Activated CD4-positive, alpha-beta memory T cell treated with anti-CD3 and anti-CD28 coated beads for 36 hours (primary cell): ENCODE measurements at regions of chr15 and their contacts with region 1.

Region 1: GRCh38 chr15:36883713-36884517 is 216.4 kb downstream of the MEIS2 start:
- DNase-seq: peak; percentile 76
- H3K4me3 Mint-ChIP-seq: no peak overlapping the region
- H3K27ac Mint-ChIP-seq: no peak overlapping the region
- H3K4me1 Mint-ChIP-seq: peaks cover 14% of the 10 kb centered on the region
- H3K27me3 Mint-ChIP-seq: peaks cover 89% of the 10 kb centered on the region

Region 2: DNA sequence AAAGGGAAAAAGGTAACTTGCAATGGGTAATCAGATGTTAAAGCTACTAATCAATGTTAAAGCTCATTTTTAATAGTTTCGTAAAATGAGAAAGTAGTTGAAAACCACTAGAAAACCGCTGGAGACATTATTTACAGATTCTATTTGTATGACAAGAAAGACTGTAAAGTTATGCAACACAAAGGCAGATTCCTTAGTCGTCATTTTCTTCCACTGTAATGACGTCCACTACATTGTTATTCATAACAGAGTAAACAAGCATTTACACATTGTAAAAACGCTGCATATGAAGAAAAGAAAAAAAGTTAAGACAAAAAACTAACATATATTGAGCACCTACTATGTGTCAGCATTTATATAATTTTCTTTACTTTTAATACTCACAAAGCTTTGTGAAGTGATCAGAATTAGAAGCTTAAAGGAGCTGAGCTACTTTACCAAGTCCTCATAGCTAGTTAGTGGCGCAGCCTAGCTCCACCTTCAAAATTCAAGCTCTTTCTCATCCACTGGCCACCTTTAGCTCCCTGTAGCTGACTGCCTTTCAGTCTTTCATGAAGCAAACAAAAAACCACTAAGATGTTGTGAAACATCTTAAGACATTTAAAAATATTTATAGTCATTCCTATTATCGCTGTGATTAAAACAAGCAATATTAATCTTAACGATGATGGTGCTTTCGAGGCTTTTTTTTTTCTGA is 404.6 kb before region 1 on chr15:
- CTCF ChIA-PET with region 1: no interaction called
- POLR2A ChIA-PET with region 1: no interaction called
- intact Hi-C with region 1: no loop called
- DNase-seq: no peak
- H3K4me3 Mint-ChIP-seq: no peak overlapping the region
- H3K27ac Mint-ChIP-seq: no peak overlapping the region
- H3K4me1 Mint-ChIP-seq: no peaks in the 10 kb centered on the region
- H3K27me3 Mint-ChIP-seq: peaks cover 1% of the 10 kb centered on the region

Region 3: GRCh38 chr15:36666228-36666905 is 217.5 kb before region 1 on chr15:
- CTCF ChIA-PET with region 1: no interaction called
- POLR2A ChIA-PET with region 1: no interaction called
- intact Hi-C with region 1: no loop called
- DNase-seq: no peak
- H3K4me3 Mint-ChIP-seq: no peak overlapping the region
- H3K27ac Mint-ChIP-seq: no peak overlapping the region
- H3K4me1 Mint-ChIP-seq: no peaks in the 10 kb centered on the region
- H3K27me3 Mint-ChIP-seq: no peaks in the 10 kb centered on the region

Region 4: DNA sequence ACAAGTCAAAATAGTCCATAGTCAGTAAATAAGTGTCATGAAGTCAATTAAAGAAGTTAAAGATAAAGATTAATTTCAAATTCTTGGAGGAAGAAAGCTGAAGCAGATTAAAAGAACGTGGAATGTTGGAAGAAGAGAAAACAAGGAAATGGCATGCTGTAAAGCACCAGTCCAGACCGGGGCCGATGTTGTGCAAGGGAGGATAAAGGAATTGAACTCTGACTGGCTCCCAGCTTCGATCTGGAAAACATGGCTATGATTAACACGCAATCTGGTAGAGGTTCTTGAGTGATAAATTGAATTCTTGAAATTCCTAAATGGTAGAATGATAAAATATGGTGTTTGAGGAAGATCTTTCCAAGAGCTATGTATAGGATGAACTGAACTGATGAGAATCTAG is 22.0 kb after region 1 on chr15:
- CTCF ChIA-PET with region 1: no interaction called
- POLR2A ChIA-PET with region 1: no interaction called
- intact Hi-C with region 1: no loop called
- DNase-seq: no peak
- H3K4me3 Mint-ChIP-seq: no peak overlapping the region
- H3K27ac Mint-ChIP-seq: no peak overlapping the region
- H3K4me1 Mint-ChIP-seq: no peaks in the 10 kb centered on the region
- H3K27me3 Mint-ChIP-seq: no peaks in the 10 kb centered on the region

Region 5: DNA sequence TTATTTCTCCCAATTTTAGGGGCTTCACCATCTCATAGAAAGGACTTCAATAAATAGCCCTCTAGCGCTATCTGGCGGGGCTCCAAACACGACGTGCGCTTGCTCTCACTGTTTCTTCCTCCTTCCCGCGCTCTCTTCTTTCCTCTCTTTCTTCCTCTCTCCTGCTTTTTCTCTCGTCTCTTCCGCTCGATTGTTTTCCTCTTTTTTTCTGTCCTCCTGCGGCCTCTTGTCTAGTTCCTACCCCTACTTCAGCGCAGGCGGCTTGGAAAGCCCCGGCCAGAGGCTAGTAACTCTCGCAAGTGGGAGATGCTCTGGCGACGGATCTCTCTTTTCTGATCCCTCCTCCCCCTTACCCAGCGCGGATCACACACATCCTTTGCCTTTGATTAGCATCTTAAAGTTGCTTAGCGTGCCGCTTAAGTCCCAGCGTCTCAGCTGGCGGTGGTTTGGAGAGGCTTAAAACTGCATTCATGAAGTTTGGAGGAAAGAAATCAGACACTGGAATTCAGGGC is 222.6 kb after region 1 on chr15:
- CTCF ChIA-PET with region 1: interaction called, 3 read pairs
- POLR2A ChIA-PET with region 1: no interaction called
- intact Hi-C with region 1: loop called (anchors 1 kb)
- DNase-seq: no peak
- H3K4me3 Mint-ChIP-seq: no peak overlapping the region
- H3K27ac Mint-ChIP-seq: no peak overlapping the region
- H3K4me1 Mint-ChIP-seq: peaks cover 21% of the 10 kb centered on the region
- H3K27me3 Mint-ChIP-seq: peaks cover 82% of the 10 kb centered on the region

Region 6: DNA sequence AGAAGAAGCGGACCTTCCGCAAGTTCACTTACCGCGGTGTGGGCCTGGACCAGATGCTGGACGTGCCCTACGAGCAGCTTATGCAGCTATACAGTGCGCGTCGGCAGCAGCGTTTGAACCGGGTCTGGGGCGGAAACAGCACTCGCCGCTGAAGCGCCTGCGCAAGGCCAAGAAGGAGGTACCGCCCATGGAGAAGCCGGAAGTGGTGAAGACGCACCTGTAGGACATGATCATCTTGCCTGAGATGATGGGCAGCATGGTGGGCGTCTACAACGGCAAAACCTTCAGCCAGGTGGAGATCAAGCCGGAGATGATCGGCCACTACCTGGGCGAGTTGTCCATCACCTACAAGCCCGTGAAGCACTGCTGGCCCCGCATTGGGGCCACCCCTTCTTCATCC is 606.8 kb after region 1 on chr15:
- CTCF ChIA-PET with region 1: no interaction called
- POLR2A ChIA-PET with region 1: no interaction called
- intact Hi-C with region 1: no loop called
- DNase-seq: no peak
- H3K4me3 Mint-ChIP-seq: no peak overlapping the region
- H3K27ac Mint-ChIP-seq: no peak overlapping the region
- H3K4me1 Mint-ChIP-seq: no peaks in the 10 kb centered on the region
- H3K27me3 Mint-ChIP-seq: no peaks in the 10 kb centered on the region

Region 7: DNA sequence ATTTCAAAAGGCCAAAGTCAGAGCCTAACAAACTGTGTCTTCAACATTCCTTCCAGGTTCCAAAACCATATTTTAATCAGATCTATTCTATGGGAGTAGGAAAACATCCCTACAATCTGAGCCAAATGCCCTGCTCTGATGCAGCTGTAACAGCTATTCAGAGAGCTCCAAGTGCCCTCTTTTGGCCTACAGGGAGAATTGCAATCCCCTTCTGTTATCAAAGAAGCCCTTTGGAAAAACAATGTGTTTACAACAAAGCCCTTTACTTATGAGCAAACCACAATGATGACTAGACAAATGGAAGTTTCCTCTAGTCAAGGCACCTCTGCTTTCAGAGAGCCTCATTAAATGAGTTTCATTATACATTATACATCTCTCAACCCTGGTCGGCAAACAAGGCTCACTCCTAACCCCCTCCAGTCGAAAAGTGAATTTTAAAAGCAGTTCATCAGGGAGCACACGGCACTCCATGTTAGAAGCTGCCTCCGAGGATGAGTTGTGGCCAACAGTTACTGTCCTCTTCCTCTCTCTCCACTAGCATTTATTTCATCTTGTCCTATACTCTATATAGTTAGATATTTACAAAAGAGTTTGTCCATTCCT is 1008.0 kb after region 1 on chr15:
- CTCF ChIA-PET with region 1: no interaction called
- POLR2A ChIA-PET with region 1: no interaction called
- intact Hi-C with region 1: loop called (anchors 5 kb)
- DNase-seq: no peak
- H3K4me3 Mint-ChIP-seq: no peak overlapping the region
- H3K27ac Mint-ChIP-seq: no peak overlapping the region
- H3K4me1 Mint-ChIP-seq: no peaks in the 10 kb centered on the region
- H3K27me3 Mint-ChIP-seq: peaks cover 10% of the 10 kb centered on the region